ENCODE measurements at regions of chr9 and their contacts with region 1.

Region 1: DNA sequence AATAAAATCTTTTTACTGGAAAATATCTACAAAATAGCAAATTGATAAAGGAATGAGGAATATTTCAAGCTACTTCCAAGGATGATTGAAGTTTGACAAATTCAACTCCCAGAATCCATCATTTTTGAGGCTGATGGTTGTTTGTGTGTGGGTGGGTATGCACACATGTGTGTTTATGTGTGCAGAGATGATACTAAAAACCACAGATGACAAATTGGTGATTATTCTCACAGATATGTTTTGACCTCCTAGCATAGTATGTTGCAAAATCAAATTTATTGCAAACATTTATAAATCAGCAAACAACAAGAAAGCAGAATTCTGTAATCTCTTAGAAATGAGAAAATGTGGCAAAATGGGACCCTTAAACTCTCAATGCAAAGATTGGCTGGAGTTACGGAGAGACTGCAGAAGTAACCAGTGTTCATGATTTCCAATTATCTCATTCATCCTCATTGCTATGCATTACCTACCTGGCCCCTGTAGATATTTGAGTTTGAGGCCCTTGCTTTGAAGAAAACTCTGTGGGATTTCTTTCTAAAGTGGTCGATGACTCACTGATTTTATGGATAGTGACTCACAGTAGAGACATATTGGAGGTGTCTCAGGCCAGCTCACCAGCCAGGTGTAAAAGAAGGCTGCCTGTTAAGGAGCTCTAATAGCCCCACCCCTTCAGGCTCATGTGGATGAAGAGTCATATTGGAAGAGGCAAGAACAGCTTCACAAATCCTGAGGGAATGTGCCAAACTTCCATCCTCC is 44.6 kb upstream of the TMC1 start:
- ATAC-seq: peak in 6 of 8 experiments; percentile 34 to 82 (median 60)
- H3K4me3 ChIP-seq: no peak overlapping the region
- H3K27ac ChIP-seq: no peak overlapping the region
- H3K4me1 ChIP-seq: peaks cover 5 to 10% of the 10 kb centered on the region in 2 donors

Region 2: GRCh38 chr9:72396247-72397091 is 80.3 kb before region 1 on chr9:
- in situ Hi-C with region 1: loop called in 1 of 9 experiments (anchors 25 kb)
- ATAC-seq: peak in 4 of 8 experiments; percentile 38 to 97 (median 95)
- H3K4me3 ChIP-seq: no peak overlapping the region
- H3K27ac ChIP-seq: no peak overlapping the region
- H3K4me1 ChIP-seq: no peaks in the 10 kb centered on the region

Region 3: GRCh38 chr9:72648324-72649126 is 171.7 kb after region 1 on chr9:
- in situ Hi-C with region 1: no loop called
- ATAC-seq: peak in 4 of 8 experiments; percentile 26 to 43 (median 36)
- H3K4me3 ChIP-seq: no peak overlapping the region
- H3K27ac ChIP-seq: no peak overlapping the region
- H3K4me1 ChIP-seq: peaks cover 10 to 21% of the 10 kb centered on the region in 2 donors

Measured in motor neuron (in vitro differentiated cells).